Breast epithelium (tissue), 4 donors: ENCODE measurements at regions of chr4 and their contacts with region 1.

Region 1: GRCh38 chr4:102116121-102116520 is 229.2 kb downstream of the SLC39A8 start:
- DNase-seq: no peak
- H3K4me3 ChIP-seq: no peak overlapping the region
- H3K27ac ChIP-seq: no peak overlapping the region
- H3K4me1 ChIP-seq: no peaks in the 10 kb centered on the region
- H3K27me3 ChIP-seq: no peaks in the 10 kb centered on the region
- CTCF ChIP-seq: no peak
- POLR2A ChIP-seq: no peak

Region 2: DNA sequence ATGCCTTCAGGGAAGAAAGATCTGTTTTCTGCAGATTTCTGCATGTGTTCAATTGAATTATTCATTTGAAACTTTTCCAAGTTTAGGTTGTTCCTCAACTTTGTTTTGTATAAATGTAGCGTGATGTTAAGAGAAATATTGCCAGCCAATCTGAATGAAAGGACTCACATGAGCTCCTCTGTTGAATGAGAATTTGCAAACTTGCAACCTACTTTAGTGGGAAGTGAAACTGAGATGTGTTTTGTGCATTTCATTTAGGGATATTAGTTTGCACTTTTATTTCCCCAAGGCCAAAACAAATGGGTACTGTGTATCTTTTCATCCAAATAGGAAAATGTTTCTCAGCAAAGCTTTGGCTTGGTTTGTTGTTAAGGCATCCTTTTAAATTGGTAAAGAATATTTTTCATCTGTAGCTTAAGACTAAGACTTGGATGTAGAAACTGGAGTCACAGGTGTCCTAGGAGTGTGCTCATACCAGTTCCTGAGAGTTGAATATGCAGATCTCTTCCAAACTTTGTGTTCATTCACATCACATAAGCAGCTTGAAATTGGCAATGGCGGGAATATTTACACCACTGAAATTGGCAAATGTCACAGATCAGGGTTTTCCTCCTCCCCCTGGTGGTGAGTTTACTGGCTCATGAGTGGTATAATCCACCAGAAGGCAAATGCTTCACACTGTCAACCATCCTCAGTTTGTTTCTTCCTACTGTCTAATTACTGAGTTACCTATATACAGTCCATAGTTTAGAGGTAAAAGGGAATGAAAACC is 519.2 kb before region 1 on chr4:
- intact Hi-C with region 1: no loop called
- DNase-seq: no peak
- H3K4me3 ChIP-seq: no peak overlapping the region
- H3K27ac ChIP-seq: no peak overlapping the region
- H3K4me1 ChIP-seq: no peaks in the 10 kb centered on the region
- H3K27me3 ChIP-seq: no peaks in the 10 kb centered on the region
- CTCF ChIP-seq: no peak
- POLR2A ChIP-seq: no peak

Region 3: GRCh38 chr4:102104278-102104677 is 11.8 kb before region 1 on chr4:
- intact Hi-C with region 1: loop called (anchors 2 kb)
- DNase-seq: no peak
- H3K4me3 ChIP-seq: no peak overlapping the region
- H3K27ac ChIP-seq: no peak overlapping the region
- H3K4me1 ChIP-seq: no peaks in the 10 kb centered on the region
- H3K27me3 ChIP-seq: no peaks in the 10 kb centered on the region
- CTCF ChIP-seq: no peak
- POLR2A ChIP-seq: no peak

Region 4: DNA sequence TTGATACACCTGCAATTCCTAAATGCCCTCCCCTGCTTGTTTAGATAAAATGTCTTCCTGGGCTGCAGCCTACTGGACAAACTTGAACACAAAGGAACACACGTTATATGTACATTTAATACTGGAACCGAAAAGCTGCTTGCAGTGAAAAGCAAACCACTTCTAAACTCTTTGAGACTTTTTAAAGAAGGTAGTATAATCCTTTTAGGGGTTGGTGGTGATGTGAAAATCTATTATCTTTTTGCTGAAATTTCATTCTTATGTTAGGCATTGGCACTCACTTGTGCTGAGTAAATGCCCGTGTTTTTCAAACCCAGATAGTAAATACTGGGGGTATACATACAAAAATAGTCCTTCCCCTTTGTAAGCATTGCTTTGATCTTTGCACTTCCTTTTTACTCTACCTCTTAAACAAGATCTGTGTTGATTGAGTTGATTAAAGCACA is 387.2 kb after region 1 on chr4:
- intact Hi-C with region 1: no loop called
- DNase-seq: no peak
- H3K4me3 ChIP-seq: peak overlapping the region; percentile 15 to 93 (median 89)
- H3K27ac ChIP-seq: peak overlapping the region; percentile 97 to 99
- H3K4me1 ChIP-seq: peaks cover 0 to 5% of the 10 kb centered on the region in 2 donors
- H3K27me3 ChIP-seq: no peaks in the 10 kb centered on the region
- CTCF ChIP-seq: no peak
- POLR2A ChIP-seq: no peak